ENCODE measurements at regions of chr1 and their contacts with region 1.

Region 1: DNA sequence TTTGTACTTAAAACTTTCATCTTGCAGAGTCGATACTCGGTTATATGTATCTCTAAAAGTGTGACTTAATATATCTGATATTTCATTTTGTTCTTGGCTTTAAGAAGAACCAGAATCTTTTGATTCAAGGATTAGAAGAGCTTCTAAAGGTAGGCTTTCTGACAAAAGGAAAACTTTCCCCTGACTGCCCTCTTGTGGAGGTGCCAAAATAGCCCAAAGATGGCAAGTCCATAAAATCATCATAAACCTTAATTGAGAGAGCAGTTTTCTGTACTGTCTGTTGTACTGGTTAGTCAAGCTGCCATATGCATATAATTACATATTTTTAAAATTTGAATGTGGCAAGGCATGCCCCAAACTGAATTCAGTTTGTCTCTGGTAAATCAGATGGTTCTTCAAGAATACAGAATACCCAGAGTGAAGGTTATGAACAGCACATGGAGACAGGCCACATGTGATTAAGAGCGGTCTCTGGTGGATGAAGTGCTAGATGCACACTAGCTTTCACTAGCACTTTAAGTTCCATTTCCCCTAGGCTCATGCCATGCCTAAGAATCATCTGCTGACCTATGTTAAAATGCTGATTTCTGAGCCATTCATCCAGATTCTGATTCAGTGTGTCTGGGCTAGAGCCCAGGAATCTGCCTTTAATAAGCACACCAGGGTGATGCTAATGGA is 27.7 kb upstream of the ELAVL4 start:
- DNase-seq: peak; percentile 51
- H3K4me3 Mint-ChIP-seq: no peak overlapping the region
- H3K27ac Mint-ChIP-seq: no peak overlapping the region
- H3K4me1 Mint-ChIP-seq: no peaks in the 10 kb centered on the region
- H3K27me3 Mint-ChIP-seq: no peaks in the 10 kb centered on the region
- CTCF ChIP-seq: peak; percentile 31

Region 2: GRCh38 chr1:49971088-49971487 is 110.0 kb before region 1 on chr1:
- CTCF ChIA-PET with region 1: no interaction called
- POLR2A ChIA-PET with region 1: no interaction called
- intact Hi-C with region 1: no loop called
- DNase-seq: peak; percentile 13
- H3K4me3 Mint-ChIP-seq: no peak overlapping the region
- H3K27ac Mint-ChIP-seq: no peak overlapping the region
- H3K4me1 Mint-ChIP-seq: no peaks in the 10 kb centered on the region
- H3K27me3 Mint-ChIP-seq: no peaks in the 10 kb centered on the region
- CTCF ChIP-seq: no peak

Region 3: DNA sequence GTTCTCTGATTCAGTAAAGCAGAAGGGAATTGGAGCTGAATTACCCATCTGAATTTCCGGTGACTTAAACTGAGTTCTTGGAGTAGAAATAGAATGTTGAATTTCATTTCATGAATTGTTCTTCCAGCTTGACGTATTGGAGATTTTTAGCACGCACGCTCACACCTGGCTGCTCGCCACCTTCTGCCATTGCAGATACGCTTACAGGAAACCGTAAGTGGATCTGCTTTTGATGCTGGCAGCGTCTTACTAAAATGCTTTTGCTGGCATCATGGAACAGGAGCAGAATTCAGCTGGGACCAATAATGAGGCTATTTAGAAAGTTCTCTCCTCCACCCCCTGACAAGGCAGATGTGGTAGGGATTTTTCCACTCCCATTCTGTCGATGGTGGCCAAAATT is 10.0 kb after region 1 on chr1:
- CTCF ChIA-PET with region 1: interaction called, 11 read pairs
- POLR2A ChIA-PET with region 1: no interaction called
- intact Hi-C with region 1: no loop called
- DNase-seq: no peak
- H3K4me3 Mint-ChIP-seq: no peak overlapping the region
- H3K27ac Mint-ChIP-seq: no peak overlapping the region
- H3K4me1 Mint-ChIP-seq: no peaks in the 10 kb centered on the region
- H3K27me3 Mint-ChIP-seq: no peaks in the 10 kb centered on the region
- CTCF ChIP-seq: no peak

Region 4: DNA sequence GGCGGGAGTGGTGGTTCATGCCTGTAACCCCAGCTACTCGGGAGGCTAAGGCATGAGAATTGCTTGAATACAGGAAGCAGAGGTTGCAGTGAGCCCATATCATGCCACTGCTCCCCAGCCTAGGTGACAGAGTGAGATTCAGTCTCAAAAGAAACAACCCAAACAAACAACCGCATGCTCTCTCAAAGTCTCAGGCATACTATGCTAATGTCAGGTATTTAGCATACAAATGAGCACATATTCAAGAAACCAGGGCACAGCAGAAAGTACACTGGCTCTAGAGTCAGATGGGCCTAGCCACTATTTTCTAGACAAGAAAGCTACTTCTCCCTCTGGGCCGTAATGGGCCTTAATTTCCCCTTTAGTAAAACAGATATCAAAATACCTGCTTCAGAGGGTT is 82.6 kb after region 1 on chr1:
- CTCF ChIA-PET with region 1: no interaction called
- POLR2A ChIA-PET with region 1: no interaction called
- intact Hi-C with region 1: no loop called
- DNase-seq: no peak
- H3K4me3 Mint-ChIP-seq: no peak overlapping the region
- H3K27ac Mint-ChIP-seq: no peak overlapping the region
- H3K4me1 Mint-ChIP-seq: no peaks in the 10 kb centered on the region
- H3K27me3 Mint-ChIP-seq: peaks cover 12% of the 10 kb centered on the region
- CTCF ChIP-seq: no peak

Region 5: GRCh38 chr1:50332941-50333594 is 252.0 kb after region 1 on chr1:
- CTCF ChIA-PET with region 1: no interaction called
- POLR2A ChIA-PET with region 1: no interaction called
- intact Hi-C with region 1: loop called (anchors 5 kb)
- DNase-seq: peak; percentile 40
- H3K4me3 Mint-ChIP-seq: peak overlapping the region; percentile 49
- H3K27ac Mint-ChIP-seq: no peak overlapping the region
- H3K4me1 Mint-ChIP-seq: no peaks in the 10 kb centered on the region
- H3K27me3 Mint-ChIP-seq: peaks cover 58% of the 10 kb centered on the region
- CTCF ChIP-seq: peak; percentile 59

Measured in MCF 10A (cell line).